ENCODE measurements at regions of chr16 and their contacts with region 1.

Region 1: DNA sequence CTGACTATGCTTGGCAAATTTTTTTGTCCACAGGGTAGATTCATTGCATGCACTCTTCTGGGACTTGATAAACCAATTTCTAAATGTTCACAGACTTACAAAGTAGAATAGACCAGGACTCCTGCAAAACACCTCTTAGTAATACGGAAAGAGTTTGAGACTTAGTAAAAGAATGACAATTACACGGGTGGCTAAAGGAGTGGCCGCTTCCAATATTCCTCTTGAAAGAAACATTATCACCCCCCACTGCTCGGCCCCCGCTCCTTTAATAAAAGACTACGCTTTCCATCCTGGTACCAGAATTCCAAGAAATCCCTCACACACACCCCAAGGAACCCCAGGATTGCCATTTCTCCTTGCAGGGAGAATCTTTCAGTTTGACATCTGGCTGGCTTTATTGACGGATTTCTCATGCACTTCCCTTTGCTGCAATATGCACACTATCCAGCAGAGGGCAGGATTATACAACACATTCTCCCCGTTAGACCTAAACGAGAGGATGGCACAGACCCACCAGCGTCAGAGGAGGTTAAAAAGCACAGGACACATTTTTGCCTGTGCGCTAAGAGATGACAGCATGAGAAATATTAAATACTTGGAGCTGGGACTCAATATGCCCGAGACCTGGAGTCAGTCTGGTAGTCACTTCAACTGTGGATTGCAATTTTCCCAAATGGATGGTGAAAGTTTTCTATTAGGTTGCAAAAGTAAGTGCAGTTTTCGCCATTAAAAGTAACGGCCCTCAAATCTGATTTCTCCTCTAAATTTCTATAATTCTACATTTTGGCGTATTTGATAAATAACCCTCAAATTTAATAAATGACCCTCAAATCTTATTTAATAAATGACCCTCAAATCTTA is 46.6 kb upstream of the NUDT7 start:
- DNase-seq: peak; percentile 70 to 76
- H3K4me3 ChIP-seq: no peak overlapping the region
- H3K27ac ChIP-seq: no peak overlapping the region
- H3K4me1 ChIP-seq: no peaks in the 10 kb centered on the region
- H3K27me3 ChIP-seq: no peaks in the 10 kb centered on the region
- CTCF ChIP-seq: peak; percentile 65 to 99 (median 92)
- POLR2A ChIP-seq: no peak

Region 2: DNA sequence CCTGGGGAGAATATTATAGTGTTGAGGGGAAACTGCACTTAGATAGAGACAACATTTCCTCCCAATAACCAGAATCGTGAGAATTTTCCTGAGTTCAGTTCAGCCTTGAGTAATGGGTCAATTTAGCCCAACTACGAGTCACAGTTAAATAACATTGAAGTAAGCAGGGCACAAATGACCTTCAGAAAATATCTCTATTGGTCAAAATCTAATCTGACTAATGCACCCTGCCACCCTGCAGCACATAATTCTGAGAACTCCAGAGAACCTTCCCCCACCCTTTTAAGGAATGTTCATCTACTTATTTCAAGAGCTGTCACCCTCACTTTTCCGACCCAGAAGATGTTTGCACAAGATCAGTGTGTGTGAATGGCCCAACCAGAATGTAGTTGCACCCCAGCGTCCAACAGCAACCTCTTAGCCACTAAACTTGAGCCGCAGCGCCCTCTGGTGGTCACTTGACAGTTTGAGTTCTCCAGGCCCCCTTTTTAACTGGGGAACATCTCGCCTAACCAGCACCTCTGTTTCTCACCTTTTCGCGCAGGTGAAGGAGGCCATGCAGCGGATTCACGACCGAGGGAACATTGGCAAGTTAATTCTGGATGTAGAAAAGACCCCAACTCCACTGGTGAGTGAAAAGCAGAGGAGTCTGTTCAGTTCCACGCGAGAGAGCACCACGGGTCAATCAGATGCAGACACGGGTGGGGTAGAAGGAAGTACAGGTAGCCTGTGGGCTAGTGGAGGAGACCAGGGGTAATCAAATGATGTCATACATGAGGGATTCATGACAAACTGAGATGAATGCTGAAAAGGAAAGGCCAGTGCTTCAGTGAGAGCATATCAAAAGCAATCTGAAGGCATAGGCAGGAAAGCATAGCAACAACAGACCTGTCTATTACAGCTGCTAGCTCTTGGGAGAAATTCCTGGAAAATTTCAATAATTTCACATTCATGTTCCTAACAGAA is 295.9 kb after region 1 on chr16:
- intact Hi-C with region 1: loop called (anchors 5 kb)
- DNase-seq: peak; percentile 86 to 92
- H3K4me3 ChIP-seq: no peak overlapping the region
- H3K27ac ChIP-seq: peak overlapping the region in 1 of 3 donors; percentile 34
- H3K4me1 ChIP-seq: peaks cover 0 to 6% of the 10 kb centered on the region in 2 donors
- H3K27me3 ChIP-seq: no peaks in the 10 kb centered on the region
- CTCF ChIP-seq: peak; percentile 73 to 88 (median 80)
- POLR2A ChIP-seq: no peak

Region 3: DNA sequence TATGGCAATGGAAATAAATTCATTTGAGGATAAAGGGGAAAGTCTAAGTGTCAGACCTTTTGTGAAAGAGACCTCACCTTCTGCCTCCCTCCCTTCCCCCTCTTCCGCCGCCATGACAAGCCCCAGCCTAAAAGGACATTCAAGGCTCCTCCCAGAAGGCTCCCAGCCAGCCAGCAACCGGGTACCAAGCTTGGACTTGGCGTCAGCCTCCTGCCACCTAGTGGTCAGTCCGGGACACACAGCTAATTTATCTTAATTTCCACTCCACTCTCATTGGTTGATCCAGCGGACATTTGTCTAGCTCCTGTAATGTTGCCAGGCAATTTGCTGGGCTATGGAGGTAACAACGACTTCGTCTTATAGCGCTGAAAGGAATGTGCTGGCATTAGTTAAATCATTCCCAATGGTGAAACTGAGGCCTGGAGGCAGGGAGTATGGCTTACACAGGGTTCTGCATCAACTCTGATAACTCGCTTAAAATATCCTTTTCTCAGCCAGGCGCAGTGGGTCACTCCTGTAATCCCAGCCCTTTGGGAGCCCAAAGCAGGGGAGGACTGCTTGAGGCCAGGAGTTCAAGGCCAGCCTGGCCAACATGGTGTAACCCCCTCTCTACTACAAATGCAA is 327.3 kb after region 1 on chr16:
- intact Hi-C with region 1: loop called (anchors 10 kb)
- DNase-seq: peak; percentile 84 to 87
- H3K4me3 ChIP-seq: no peak overlapping the region
- H3K27ac ChIP-seq: no peak overlapping the region
- H3K4me1 ChIP-seq: peaks cover 0 to 6% of the 10 kb centered on the region in 2 donors
- H3K27me3 ChIP-seq: no peaks in the 10 kb centered on the region
- CTCF ChIP-seq: peak; percentile 73 to 91 (median 84)
- POLR2A ChIP-seq: no peak

Measured in thyroid gland (tissue), 4 donors.